ENCODE measurements at regions of chr1 and their contacts with region 1.

Region 1: DNA sequence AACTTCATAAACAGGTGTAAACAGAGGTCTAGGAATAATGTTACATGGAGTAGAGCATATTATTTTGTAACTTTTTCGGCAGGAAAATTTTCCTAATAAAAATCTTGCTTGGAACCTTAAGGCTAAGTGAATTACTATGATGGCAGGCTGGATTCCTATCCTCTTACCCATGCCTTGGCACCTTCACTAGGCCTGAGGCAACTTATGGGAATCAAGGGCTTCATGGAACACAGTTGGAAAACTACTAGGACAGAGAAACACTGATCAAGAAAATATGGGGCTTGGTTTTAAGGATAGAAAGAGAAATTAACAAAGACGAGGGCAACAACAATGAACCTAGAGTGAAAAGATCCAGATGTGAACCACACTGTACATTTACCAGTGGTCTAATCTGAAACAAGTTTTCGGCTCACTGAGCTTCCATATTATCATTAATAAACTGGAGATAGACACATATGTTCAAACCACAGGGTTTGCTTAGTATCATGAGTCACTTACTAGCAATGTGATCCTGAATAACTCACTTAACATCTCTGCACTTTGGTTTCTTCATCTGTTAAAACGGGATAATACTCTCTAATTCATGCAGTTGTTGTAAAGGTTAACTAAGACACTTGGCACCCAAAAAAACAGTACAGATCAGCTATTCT is 68.5 kb downstream of the GPATCH2 start:
- DNase-seq: no peak
- ATAC-seq: no peak

Region 2: DNA sequence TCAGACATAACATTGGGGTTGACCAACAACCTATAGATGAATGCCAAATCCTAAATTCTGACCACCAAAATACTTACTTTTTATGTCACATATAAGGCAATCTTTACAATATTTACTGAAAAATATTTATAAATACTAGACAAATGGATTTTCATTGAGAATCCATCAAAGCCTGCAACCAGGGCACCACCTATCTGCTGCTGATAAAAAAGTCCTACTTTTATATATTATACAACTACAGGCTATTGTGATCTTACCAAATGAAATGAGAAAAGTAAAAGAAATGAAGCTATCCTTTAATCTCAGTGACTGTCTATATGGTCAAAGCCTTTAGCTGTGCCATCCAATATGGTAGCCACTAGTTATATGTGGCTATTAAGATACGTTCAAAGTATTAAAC is 17.2 kb after region 1 on chr1:
- intact Hi-C with region 1: loop called (anchors 1 kb)
- DNase-seq: no peak
- ATAC-seq: no peak

Region 3: DNA sequence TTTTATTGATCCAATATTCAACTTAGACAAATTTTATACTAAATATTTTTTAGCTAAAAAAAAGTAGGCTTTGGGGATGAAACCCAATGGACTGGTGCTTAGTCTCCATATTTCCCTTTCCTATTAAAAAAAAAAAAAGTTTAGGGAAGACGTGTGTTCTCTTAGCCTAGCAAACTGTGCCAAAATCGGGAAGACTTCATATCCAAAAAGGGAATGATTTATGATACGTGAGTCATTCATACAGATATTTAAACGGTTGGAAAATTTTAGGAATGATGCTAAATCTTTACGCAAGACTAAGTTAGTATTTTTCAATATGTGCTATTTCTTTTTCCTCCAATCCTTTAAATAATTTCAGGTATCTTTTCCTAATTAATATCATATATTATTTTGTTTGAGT is 119.5 kb after region 1 on chr1:
- intact Hi-C with region 1: no loop called
- DNase-seq: no peak
- ATAC-seq: no peak

Region 4: DNA sequence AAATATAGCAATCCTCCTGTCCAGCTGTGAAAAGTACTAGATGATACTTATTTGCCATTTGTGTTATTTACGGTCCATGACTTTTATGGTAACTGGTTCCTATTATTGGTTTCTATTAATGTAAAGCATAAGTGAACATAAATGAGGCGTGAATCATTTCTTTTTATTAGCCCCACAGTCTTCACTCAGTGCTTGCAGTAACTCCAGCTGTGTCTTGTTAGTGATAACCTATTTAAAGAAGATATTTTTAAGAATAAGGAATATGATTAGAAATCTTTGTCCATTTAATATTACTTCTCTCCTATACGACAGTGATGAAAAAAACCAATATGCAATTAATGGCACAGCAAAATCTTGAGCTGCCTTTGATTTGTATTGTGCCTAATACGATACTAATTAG is 218.7 kb after region 1 on chr1:
- intact Hi-C with region 1: no loop called
- DNase-seq: no peak
- ATAC-seq: no peak